ENCODE measurements at regions of chr1 and their contacts with region 1.

Region 1: GRCh38 chr1:65209005-65209885 is 61.2 kb downstream of the AK4 start:
- DNase-seq: no peak
- H3K4me3 ChIP-seq: no peak overlapping the region
- H3K27ac ChIP-seq: no peak overlapping the region
- H3K4me1 ChIP-seq: peaks cover 0 to 6% (median 0%) of the 10 kb centered on the region in 3 donors
- H3K27me3 ChIP-seq: no peaks in the 10 kb centered on the region
- CTCF ChIP-seq: peak; percentile 46 to 65 (median 56)
- POLR2A ChIP-seq: no peak

Region 2: DNA sequence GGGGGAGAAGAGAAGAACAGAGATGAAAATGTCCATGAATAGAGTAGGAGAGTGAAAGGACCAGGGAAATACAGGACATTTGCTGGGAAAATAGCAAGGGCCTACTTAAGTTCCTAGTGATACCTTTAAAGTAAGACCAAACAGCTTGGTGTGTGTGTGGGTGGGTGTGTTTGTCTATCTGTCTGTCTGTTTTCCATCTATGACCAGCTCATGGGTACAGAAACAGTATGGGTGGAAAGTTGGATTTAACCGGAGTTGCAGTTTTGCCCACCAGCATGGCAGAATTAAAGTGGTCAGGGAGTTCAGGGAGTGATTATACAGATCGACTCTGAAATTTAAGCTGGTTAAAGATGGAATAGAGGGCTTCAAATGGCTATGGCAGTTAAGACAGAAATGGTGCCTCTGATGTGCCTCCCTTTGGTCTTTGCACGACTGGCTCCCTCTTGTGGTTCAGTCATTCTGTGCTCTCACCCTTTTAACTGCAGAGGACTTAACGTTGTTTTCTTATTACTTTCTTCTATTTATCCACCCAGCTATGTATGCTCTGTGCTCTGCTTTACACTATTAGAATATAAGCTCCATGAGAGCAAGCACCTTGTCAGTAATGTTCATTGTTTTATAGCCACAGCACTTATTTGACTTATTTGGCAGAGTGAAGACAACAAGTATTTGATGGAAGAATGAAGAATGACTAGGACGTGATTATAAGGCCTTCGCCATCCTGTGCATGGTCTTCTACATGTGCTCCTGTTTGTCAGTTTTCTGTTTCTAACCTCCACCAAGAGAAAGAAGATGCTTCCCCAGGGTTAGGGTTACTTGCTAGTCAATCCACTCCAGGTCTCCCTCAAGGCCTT is 133.9 kb before region 1 on chr1:
- intact Hi-C with region 1: loop called (anchors 10 kb)
- DNase-seq: no peak
- H3K4me3 ChIP-seq: no peak overlapping the region
- H3K27ac ChIP-seq: no peak overlapping the region
- H3K4me1 ChIP-seq: no peaks in the 10 kb centered on the region
- H3K27me3 ChIP-seq: no peaks in the 10 kb centered on the region
- CTCF ChIP-seq: peak; percentile 39 to 75 (median 58)
- POLR2A ChIP-seq: no peak

Region 3: DNA sequence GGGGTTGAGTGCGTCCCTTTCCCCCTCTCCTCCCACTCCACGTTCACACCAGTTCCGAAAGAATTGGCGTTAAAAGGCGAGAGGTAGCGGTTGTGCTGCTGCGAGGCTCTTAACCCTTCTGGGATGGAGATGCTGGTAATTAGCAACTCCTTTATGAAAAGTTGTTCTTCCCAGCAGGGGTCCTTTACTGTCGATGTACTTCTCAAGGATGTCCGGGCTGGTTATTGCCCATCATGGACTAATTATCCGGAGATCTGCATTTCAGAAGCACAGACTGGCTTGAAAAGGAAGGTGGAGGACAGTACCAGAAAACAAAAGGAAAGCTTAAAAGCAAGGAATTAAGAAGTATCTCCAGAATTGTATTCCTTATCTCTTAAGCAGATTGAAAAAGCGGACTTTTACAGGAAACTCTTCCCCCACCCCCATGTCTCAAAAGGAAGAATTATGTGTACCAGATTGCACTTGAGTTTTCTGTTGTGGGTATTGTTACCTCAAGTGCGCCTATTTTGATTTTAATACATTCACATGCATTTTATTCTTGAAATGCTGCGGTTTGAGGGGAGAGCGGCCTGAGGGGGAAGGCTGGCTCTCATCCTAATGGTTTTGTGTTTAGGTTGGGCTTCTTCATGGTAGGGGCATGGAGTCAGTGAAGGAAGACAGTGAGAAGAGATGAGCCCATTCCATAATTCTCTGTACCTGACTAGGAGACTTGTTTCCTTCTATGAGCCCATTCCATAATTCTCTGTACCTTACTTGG is 59.7 kb before region 1 on chr1:
- intact Hi-C with region 1: loop called (anchors 10 kb)
- DNase-seq: no peak
- H3K4me3 ChIP-seq: peak overlapping the region; percentile 52 to 88 (median 70)
- H3K27ac ChIP-seq: peak overlapping the region; percentile 73 to 93 (median 86)
- H3K4me1 ChIP-seq: peaks cover 5 to 50% (median 9%) of the 10 kb centered on the region in 3 donors
- H3K27me3 ChIP-seq: peaks cover 0 to 25% (median 0%) of the 10 kb centered on the region in 4 donors
- CTCF ChIP-seq: no peak
- POLR2A ChIP-seq: no peak

Region 4: GRCh38 chr1:65812065-65812464 is 602.8 kb after region 1 on chr1:
- intact Hi-C with region 1: no loop called
- DNase-seq: no peak
- H3K4me3 ChIP-seq: no peak overlapping the region
- H3K27ac ChIP-seq: peak overlapping the region in 2 of 4 donors; percentile 35 to 39
- H3K4me1 ChIP-seq: peaks cover 0 to 6% (median 0%) of the 10 kb centered on the region in 3 donors
- H3K27me3 ChIP-seq: no peaks in the 10 kb centered on the region
- CTCF ChIP-seq: no peak
- POLR2A ChIP-seq: no peak